SK-N-SH (cell line): ENCODE measurements at regions of chr11 and their contacts with region 1.

Region 1: DNA sequence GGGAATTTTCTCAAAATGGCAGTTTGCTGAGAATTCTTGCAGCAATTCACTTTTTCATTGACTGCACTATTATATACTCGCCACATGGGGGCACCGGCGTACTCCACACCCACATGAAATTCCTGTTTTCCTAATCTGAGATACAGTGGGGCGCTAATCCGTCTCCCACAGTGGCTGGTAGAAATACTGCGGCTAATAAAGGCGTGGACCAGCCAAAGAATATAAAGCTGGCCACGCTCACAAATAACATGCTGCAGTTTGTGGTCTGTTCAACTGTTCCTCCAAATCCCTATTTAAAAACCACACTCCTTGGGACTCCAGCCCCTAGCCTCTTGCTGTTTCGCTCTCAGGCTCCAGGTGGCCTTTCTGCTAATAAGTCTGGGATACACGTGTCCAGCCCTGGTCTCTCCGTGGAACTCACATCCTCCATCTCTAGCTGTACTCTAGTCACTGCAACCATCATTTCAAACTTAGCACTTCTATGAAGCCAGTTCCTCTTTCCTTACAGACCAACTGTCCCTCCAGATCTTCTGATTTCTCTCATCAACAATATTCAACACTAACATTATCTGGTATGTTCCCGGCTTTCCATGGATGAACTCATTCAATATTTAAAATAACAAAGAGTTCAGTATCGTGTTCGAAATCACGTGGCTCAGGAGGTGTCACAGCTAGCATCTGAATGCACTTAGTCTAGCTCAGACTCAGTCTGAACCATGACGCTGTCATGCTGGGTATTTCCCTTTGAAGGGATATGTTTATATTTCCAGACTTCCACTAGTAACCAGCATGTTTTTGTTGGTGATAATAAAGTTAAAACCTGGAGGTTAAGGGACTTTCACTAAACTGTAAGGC is 22.0 kb downstream of the TBRG1 start:
- DNase-seq: peak; percentile 75
- H3K4me3 ChIP-seq: peak overlapping the region; percentile 4 to 42; a peak in 2 of 4 replicates
- H3K27ac ChIP-seq: peak overlapping the region in 1 of 2 experiments; percentile 86; a peak in 2 of 4 replicates
- H3K4me1 ChIP-seq: peaks cover 3 to 7% of the 10 kb centered on the region in 2 experiments; a peak in 1 of 4 replicates
- H3K27me3 ChIP-seq: no peaks in the 10 kb centered on the region
- CTCF ChIP-seq: peak; percentile 84
- EP300 ChIP-seq: no peak
- RAD21 ChIP-seq: peak; percentile 82

Region 2: GRCh38 chr11:124633355-124633754 is 11.3 kb before region 1 on chr11:
- CTCF ChIA-PET with region 1: interaction called, 44 read pairs
- POLR2A ChIA-PET with region 1: no interaction called
- DNase-seq: peak; percentile 22
- H3K4me3 ChIP-seq: no peak overlapping the region
- H3K27ac ChIP-seq: no peak overlapping the region
- H3K4me1 ChIP-seq: no peaks in the 10 kb centered on the region
- H3K27me3 ChIP-seq: no peaks in the 10 kb centered on the region
- CTCF ChIP-seq: peak; percentile 55
- EP300 ChIP-seq: no peak
- RAD21 ChIP-seq: 0 out of 2 replicates have a peak, but pooled peaks have one; percentile 5

Region 3: DNA sequence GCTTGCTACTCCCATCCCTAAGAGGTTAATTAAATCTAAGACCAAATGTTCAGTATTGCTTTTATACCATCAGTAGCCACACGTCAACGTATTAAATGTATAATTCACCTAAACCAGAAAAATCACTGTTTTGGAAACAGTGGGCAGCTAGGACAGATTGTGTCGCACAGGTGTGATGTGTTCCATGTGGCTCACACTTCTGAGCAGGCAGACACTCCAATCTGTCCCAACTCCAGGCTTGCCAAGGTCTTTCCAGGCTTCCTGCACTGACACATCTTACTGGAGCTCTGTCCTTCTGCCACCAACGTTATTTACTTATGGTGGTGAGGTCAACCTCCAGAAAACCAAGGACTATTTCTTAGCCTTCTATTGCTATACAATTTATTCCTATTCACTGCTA is 17.5 kb after region 1 on chr11:
- CTCF ChIA-PET with region 1: interaction called, 15 read pairs
- POLR2A ChIA-PET with region 1: interaction called, 4 read pairs
- DNase-seq: no peak
- H3K4me3 ChIP-seq: no peak overlapping the region
- H3K27ac ChIP-seq: no peak overlapping the region
- H3K4me1 ChIP-seq: peaks cover 0 to 5% of the 10 kb centered on the region in 2 experiments; a peak in 2 of 4 replicates
- H3K27me3 ChIP-seq: no peaks in the 10 kb centered on the region
- CTCF ChIP-seq: no peak
- EP300 ChIP-seq: no peak
- RAD21 ChIP-seq: no peak

Region 4: DNA sequence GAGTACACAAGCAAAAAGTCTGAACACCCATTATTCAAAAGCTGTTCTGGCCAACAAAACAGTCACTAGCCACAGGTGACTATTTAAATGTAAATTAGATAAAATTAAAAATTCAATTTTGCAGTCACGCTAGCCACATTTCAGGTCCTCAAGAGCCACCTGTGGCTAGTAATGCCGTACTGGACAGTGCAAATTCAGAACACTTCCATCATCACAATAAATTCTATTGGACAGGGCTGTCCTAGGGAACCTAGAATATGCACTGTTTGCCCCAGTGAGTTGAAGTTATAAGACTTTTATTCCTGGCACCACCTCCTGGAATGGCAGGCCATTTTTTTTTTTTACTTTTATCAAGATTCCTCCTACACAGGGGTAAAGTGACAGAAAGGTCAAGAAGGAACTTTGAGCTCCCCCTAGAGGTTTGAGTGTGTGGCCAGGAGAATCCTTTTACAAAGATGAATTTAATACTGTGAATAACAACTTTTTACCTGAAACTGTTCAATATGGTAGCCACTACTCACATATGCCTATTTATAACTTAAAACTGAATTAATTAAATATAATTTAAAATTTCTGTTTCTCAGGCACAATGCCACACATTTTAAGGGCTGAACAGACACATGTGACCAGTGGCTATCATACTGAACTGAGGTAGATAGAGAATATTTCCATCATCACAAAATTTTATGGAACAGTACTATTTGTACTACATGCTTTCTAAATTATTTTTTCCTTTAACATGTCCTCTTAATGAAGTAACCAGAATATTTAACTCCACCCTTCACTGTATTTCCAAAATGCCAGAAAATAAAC is 149.0 kb after region 1 on chr11:
- CTCF ChIA-PET with region 1: interaction called, 20 read pairs
- POLR2A ChIA-PET with region 1: no interaction called
- DNase-seq: peak; percentile 52
- H3K4me3 ChIP-seq: no peak overlapping the region
- H3K27ac ChIP-seq: no peak overlapping the region
- H3K4me1 ChIP-seq: peaks cover 9 to 16% of the 10 kb centered on the region in 2 experiments; a peak in 3 of 4 replicates
- H3K27me3 ChIP-seq: no peaks in the 10 kb centered on the region
- CTCF ChIP-seq: peak; percentile 82
- EP300 ChIP-seq: no peak
- RAD21 ChIP-seq: peak; percentile 67

Region 5: GRCh38 chr11:124837491-124837856 is 192.8 kb after region 1 on chr11:
- CTCF ChIA-PET with region 1: interaction called, 33 read pairs
- POLR2A ChIA-PET with region 1: no interaction called
- DNase-seq: peak; percentile 70
- H3K4me3 ChIP-seq: peak overlapping the region in 1 of 2 experiments; percentile 52; a peak in 2 of 4 replicates
- H3K27ac ChIP-seq: peak overlapping the region in 1 of 2 experiments; percentile 54; a peak in 1 of 4 replicates
- H3K4me1 ChIP-seq: peaks cover 3 to 4% of the 10 kb centered on the region in 2 experiments; a peak in 2 of 4 replicates
- H3K27me3 ChIP-seq: peaks cover 1% of the 10 kb centered on the region
- CTCF ChIP-seq: peak; percentile 60
- EP300 ChIP-seq: no peak
- RAD21 ChIP-seq: peak; percentile 77